ENCODE measurements at regions of chr3 and their contacts with region 1.

Region 1: GRCh38 chr3:150408221-150409102 is at the start of gene TSC22D2:
- DNase-seq: peak; percentile 95
- ATAC-seq: peak; percentile 68
- H3K4me3 Mint-ChIP-seq: peak within 1 kb of the TSS; percentile 91
- H3K27ac Mint-ChIP-seq: peak within 1 kb of the TSS; percentile 94
- H3K4me1 Mint-ChIP-seq: peaks cover 27% of the 10 kb centered on the region
- H3K27me3 Mint-ChIP-seq: peaks cover 9% of the 10 kb centered on the region
- total RNA-seq, gene TSC22D2: 8.5 to 10.0 TPM

Region 2: DNA sequence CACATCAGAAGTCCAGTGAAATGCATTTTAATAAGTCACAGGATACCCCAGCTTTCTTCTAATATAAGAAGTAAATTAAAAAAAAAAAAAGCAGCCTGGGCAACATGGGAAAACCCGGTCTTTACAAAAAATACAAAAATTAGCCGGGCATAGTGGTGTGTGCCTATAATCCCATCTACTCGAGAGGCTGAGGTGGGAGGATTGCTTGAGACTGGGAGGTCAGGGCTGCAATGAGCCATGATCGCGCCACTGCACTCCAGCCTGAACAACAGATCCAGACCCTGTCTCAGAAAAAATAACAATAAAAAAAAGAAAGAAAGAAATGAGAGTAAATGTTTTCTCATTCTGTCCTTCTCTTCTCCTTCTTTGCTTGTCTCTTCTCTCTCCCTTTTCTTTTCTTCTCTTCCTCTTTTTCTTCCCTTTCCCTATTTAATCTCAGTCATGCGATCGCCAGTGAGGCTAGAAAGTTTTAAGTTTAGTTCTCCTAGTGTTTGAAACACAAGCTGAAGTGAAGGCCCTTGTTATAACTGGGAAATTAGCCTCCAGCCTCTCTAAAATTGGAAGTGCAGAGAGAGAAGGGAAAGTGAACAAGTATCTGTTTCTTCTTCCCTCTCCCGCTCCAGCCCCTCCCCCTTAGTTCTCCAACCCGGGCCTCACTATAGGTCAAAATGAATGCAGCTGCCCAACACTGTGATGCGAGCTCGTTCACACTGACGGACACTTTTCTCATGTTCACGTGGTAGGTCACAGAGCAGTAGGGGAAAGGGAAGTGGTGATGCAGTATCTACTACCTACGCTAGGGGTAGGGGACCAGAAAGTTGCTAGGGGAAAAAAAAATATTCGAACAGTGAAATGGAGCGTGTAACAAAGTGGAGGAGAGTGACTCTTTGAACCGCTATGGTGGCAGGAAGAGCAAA is 23.9 kb before region 1 on chr3:
- CTCF ChIA-PET with region 1: interaction called, 29 read pairs
- DNase-seq: peak; percentile 80
- ATAC-seq: peak; percentile 98
- H3K4me3 Mint-ChIP-seq: peak overlapping the region; percentile 53
- H3K27ac Mint-ChIP-seq: peak overlapping the region; percentile 68
- H3K4me1 Mint-ChIP-seq: peaks cover 30% of the 10 kb centered on the region
- H3K27me3 Mint-ChIP-seq: no peaks in the 10 kb centered on the region

Measured in activated CD8-positive, alpha-beta memory T cell treated with anti-CD3 and anti-CD28 coated beads, Interleukin-2, amount 10 ng/mL, durations not matched to agents 7 days and 5 days (primary cell).